ENCODE measurements at regions of chr11 and their contacts with region 1.

Region 1: GRCh38 chr11:111283945-111284481 is 14.3 kb upstream of the POU2AF3 start:
- DNase-seq: no peak
- ATAC-seq: no peak
- H3K4me3 ChIP-seq: no peak overlapping the region
- H3K27ac ChIP-seq: no peak overlapping the region
- H3K4me1 ChIP-seq: no peaks in the 10 kb centered on the region
- H3K27me3 ChIP-seq: no peaks in the 10 kb centered on the region

Region 2: GRCh38 chr11:111123463-111124398 is 160.3 kb before region 1 on chr11:
- intact Hi-C with region 1: no loop called
- DNase-seq: no peak
- ATAC-seq: no peak
- H3K4me3 ChIP-seq: no peak overlapping the region
- H3K27ac ChIP-seq: no peak overlapping the region
- H3K4me1 ChIP-seq: no peaks in the 10 kb centered on the region
- H3K27me3 ChIP-seq: no peaks in the 10 kb centered on the region

Region 3: GRCh38 chr11:111422494-111423249 is 138.7 kb after region 1 on chr11:
- intact Hi-C with region 1: loop called (anchors 1 to 2 kb)
- DNase-seq: peak; percentile 53 to 84
- ATAC-seq: peak; percentile 67
- H3K4me3 ChIP-seq: no peak overlapping the region
- H3K27ac ChIP-seq: no peak overlapping the region
- H3K4me1 ChIP-seq: peaks cover 2 to 7% of the 10 kb centered on the region in 2 donors
- H3K27me3 ChIP-seq: no peaks in the 10 kb centered on the region

Region 4: DNA sequence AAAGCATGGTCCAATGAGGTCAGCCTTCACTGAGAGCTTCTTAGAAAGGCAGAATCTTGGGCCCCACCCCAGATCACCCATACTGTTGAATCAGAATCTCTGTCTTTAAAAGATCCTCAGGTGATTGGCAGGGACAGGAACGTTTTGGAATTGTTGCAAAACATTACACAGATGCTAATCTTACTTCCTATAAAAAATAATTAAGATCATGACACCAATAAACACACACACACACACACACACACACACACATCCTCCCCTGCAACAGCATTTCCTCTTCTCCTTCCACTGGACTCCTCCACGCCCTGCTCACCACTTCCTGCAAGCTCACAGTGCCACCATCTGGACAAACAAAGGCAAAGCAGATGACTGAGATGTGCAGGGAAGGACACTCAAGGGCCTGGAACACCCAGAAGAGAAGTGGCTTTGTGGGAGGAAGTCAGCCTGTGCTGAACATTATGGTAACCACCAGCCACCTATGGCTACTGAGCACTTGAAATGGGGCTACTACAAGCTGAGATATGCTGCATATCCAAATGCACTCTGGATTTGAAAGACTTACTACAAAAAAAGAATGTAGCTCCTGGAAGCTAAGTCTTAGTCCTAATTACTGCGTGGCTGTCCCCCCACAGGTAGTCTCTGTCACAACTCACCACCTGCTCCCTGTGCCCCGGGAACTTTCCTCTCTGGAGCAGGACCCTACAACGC is 162.5 kb after region 1 on chr11:
- intact Hi-C with region 1: loop called (anchors 1 to 2 kb)
- DNase-seq: peak in 1 of 2 donors; percentile 85
- ATAC-seq: peak; percentile 88
- H3K4me3 ChIP-seq: no peak overlapping the region
- H3K27ac ChIP-seq: no peak overlapping the region
- H3K4me1 ChIP-seq: no peaks in the 10 kb centered on the region
- H3K27me3 ChIP-seq: no peaks in the 10 kb centered on the region

Measured in aorta (tissue), 5 donors.